Psoas muscle (tissue), 8 donors: ENCODE measurements at regions of chr12 and their contacts with region 1.

Region 1: GRCh38 chr12:21989819-21990412 is 48.7 kb upstream of the ABCC9 start:
- DNase-seq: no peak
- ATAC-seq: peak in 1 of 4 donors; percentile 48
- H3K4me3 ChIP-seq: no peak overlapping the region
- H3K27ac ChIP-seq: no peak overlapping the region
- H3K4me1 ChIP-seq: no peaks in the 10 kb centered on the region
- H3K27me3 ChIP-seq: no peaks in the 10 kb centered on the region
- CTCF ChIP-seq: peak; percentile 64

Region 2: GRCh38 chr12:21697904-21698630 is 291.8 kb before region 1 on chr12:
- intact Hi-C with region 1: loop called in 1 of 2 experiments (anchors 2 kb)
- DNase-seq: no peak
- ATAC-seq: peak in 1 of 4 donors; percentile 54
- H3K4me3 ChIP-seq: peak overlapping the region; percentile 28
- H3K27ac ChIP-seq: no peak overlapping the region
- H3K4me1 ChIP-seq: no peaks in the 10 kb centered on the region
- H3K27me3 ChIP-seq: no peaks in the 10 kb centered on the region
- CTCF ChIP-seq: peak; percentile 78

Region 3: GRCh38 chr12:21881965-21882364 is 108.0 kb before region 1 on chr12:
- intact Hi-C with region 1: loop called in 1 of 2 experiments (anchors 5 kb)
- DNase-seq: peak in 1 of 2 donors; percentile 45
- ATAC-seq: peak; percentile 89 to 98 (median 96)
- H3K4me3 ChIP-seq: no peak overlapping the region
- H3K27ac ChIP-seq: peak overlapping the region; percentile 42
- H3K4me1 ChIP-seq: peaks cover 26% of the 10 kb centered on the region
- H3K27me3 ChIP-seq: no peaks in the 10 kb centered on the region
- CTCF ChIP-seq: no peak

Region 4: DNA sequence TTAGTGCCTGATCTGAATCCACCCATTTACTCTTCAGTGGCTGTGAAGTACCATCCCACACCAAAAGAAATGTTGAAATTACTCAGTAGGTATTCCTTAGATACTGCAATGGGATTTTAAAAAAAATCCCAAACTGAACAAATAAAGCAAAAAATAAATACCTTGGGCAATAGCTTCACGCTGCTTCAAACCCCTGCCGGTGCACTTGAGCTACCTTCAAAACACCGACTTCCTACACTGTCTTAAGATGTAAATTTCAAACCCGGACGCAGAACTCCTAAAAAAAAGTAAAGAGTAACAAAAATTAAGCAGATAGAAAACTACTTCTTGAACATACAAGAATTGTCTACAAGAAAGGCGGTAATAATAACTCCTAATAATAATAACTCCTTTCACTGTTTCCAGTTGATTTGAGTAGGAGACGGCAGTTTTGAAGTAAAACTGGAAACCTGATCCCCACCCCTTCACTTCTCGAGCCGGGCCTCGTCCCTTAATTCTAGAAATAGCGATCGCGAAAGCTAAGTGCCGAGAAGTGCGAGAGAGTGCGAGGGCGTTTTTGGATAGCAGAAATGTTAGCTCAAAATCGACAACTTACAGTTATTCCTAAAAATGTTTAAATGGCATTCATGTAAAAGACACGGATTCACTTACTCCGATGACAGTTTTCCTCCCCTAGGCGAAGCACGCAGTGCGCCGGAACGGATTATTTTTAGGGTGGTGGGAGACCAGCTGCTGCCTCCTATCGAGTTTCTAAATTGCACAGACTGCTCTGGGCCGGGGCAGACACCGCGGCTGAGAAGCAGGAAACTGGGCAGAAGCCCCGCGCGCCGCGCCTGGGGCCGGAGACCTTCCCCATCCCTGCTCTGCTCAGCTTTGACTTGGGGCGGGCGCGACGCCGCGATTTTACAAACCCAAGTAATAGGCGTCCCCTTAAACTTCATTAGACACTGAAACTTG is 49.1 kb before region 1 on chr12 and contains the start of gene ABCC9:
- intact Hi-C with region 1: loop called in 1 of 2 experiments (anchors 5 kb)
- DNase-seq: peak; percentile 72 to 81
- ATAC-seq: peak; percentile 89 to 92 (median 90)
- H3K4me3 ChIP-seq: peak within 1 kb of the TSS; percentile 80
- H3K27ac ChIP-seq: peak within 1 kb of the TSS; percentile 94
- H3K4me1 ChIP-seq: peaks cover 18% of the 10 kb centered on the region
- H3K27me3 ChIP-seq: no peaks in the 10 kb centered on the region
- CTCF ChIP-seq: no peak
- total RNA-seq, gene ABCC9: 52.7 to 94.9 (median 88.8) TPM

Region 5: GRCh38 chr12:22069856-22070565 is 80.1 kb after region 1 on chr12:
- intact Hi-C with region 1: no loop called
- DNase-seq: no peak
- ATAC-seq: no peak
- H3K4me3 ChIP-seq: no peak overlapping the region
- H3K27ac ChIP-seq: no peak overlapping the region
- H3K4me1 ChIP-seq: no peaks in the 10 kb centered on the region
- H3K27me3 ChIP-seq: no peaks in the 10 kb centered on the region
- CTCF ChIP-seq: no peak